ENCODE measurements at regions of chr3 and their contacts with region 1.

Region 1: DNA sequence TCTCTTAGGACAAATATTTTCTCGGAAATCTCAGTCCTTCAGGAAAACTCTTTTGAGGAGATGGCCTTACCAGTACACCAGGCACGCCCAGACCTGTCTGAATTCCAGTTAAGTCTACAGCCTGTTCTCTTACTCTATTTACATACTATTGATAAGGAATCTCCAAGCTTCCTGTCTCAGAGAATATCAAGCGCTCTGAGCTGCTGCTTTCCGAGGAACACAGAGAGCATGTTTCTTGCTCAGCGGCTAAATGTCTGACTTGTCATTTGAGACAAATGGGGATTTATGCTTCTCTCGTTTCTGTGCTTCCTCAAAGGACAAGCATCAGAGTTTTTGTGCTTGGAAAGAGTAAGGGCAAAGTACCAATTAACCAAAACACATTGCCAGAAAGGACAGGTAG is 112.4 kb upstream of the CCDC54 start:
- DNase-seq: no peak
- ATAC-seq: no peak
- H3K4me3 Mint-ChIP-seq: no peak overlapping the region
- H3K27ac Mint-ChIP-seq: no peak overlapping the region
- H3K4me1 Mint-ChIP-seq: peaks cover 5% of the 10 kb centered on the region
- H3K27me3 Mint-ChIP-seq: no peaks in the 10 kb centered on the region
- CTCF ChIP-seq: no peak

Region 2: GRCh38 chr3:107216711-107217110 is 48.2 kb before region 1 on chr3:
- CTCF ChIA-PET with region 1: no interaction called
- POLR2A ChIA-PET with region 1: no interaction called
- intact Hi-C with region 1: no loop called
- DNase-seq: no peak
- ATAC-seq: no peak
- H3K4me3 Mint-ChIP-seq: no peak overlapping the region
- H3K27ac Mint-ChIP-seq: no peak overlapping the region
- H3K4me1 Mint-ChIP-seq: no peaks in the 10 kb centered on the region
- H3K27me3 Mint-ChIP-seq: peaks cover 8% of the 10 kb centered on the region
- CTCF ChIP-seq: no peak

Region 3: DNA sequence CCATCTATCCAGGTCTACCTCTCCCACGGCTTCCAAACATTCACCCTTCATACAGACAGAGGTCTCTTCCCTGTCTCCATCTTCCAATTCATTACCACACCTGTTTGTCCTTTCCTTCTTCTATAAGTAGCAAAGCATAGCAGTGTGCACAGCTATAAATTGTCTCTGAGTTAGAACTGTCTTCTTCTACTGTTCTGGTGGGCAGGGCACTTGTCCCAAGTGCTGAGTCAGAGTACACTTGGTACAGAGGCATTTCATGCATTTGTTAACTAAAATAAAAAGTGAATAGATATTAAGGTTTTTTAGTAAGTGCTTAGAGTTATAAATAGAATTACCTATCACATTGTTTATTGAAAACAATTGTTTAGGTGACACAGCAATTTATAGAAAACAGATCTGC is 37.8 kb before region 1 on chr3:
- CTCF ChIA-PET with region 1: no interaction called
- POLR2A ChIA-PET with region 1: no interaction called
- intact Hi-C with region 1: no loop called
- DNase-seq: no peak
- ATAC-seq: no peak
- H3K4me3 Mint-ChIP-seq: no peak overlapping the region
- H3K27ac Mint-ChIP-seq: no peak overlapping the region
- H3K4me1 Mint-ChIP-seq: no peaks in the 10 kb centered on the region
- H3K27me3 Mint-ChIP-seq: peaks cover 8% of the 10 kb centered on the region
- CTCF ChIP-seq: no peak

Region 4: GRCh38 chr3:107308716-107309115 is 43.8 kb after region 1 on chr3:
- CTCF ChIA-PET with region 1: no interaction called
- POLR2A ChIA-PET with region 1: no interaction called
- intact Hi-C with region 1: no loop called
- DNase-seq: no peak
- ATAC-seq: no peak
- H3K4me3 Mint-ChIP-seq: no peak overlapping the region
- H3K27ac Mint-ChIP-seq: no peak overlapping the region
- H3K4me1 Mint-ChIP-seq: no peaks in the 10 kb centered on the region
- H3K27me3 Mint-ChIP-seq: peaks cover 4% of the 10 kb centered on the region
- CTCF ChIP-seq: no peak

Region 5: GRCh38 chr3:107562969-107563529 is 298.2 kb after region 1 on chr3:
- CTCF ChIA-PET with region 1: no interaction called
- POLR2A ChIA-PET with region 1: no interaction called
- intact Hi-C with region 1: loop called (anchors 5 kb)
- DNase-seq: no peak
- ATAC-seq: no peak
- H3K4me3 Mint-ChIP-seq: no peak overlapping the region
- H3K27ac Mint-ChIP-seq: peak overlapping the region; percentile 46
- H3K4me1 Mint-ChIP-seq: peaks cover 40% of the 10 kb centered on the region
- H3K27me3 Mint-ChIP-seq: no peaks in the 10 kb centered on the region
- CTCF ChIP-seq: no peak